ENCODE measurements at regions of chr9 and their contacts with region 1.

Region 1: GRCh38 chr9:137353223-137354152 is 51.4 kb upstream of the NRARP start:
- DNase-seq: no peak
- ATAC-seq: peak; percentile 28

Region 2: GRCh38 chr9:137339045-137339907 is 14.2 kb before region 1 on chr9:
- intact Hi-C with region 1: loop called (anchors 1 kb)
- DNase-seq: no peak
- ATAC-seq: no peak

Region 3: GRCh38 chr9:137387114-137387890 is 33.8 kb after region 1 on chr9:
- intact Hi-C with region 1: loop called (anchors 5 kb)
- DNase-seq: no peak
- ATAC-seq: no peak

Region 4: DNA sequence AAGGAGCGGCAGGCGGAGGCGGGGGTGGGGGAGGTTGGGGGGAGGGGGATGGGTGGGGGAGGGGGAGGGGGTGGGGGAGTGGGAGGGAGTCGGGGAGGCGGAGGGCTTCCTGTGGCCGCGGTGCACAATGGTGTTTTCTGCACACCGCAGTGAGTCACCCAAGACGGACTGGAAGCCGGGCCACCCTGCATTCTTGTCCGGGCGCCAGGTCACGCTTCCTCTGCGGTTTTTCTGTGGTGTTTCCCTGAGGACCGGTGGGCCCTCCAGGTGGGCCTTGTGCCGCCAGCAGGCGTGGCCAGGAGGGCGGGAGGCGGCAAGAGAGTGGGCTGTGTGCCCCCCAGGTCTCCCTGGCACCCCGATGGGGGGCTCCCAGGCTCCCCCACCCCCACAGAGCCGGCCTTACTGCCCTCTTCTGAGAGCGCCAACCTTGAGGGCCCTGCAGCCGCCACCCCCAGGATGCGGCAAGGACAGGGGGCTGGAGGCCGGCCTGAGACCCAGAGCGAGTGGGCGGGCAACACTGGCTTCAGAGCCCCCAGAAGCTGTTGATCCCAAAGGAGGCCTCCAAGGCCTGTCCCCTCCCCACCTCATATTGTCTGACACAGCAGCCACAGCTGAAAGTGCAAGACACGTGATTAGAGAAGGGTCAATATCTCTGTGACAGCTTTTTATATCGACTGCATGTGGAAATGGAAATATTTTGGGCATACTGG is 58.3 kb after region 1 on chr9:
- intact Hi-C with region 1: no loop called
- DNase-seq: peak; percentile 75
- ATAC-seq: no peak

Measured in Right ventricle myocardium inferior (tissue), 1 donor.